ENCODE measurements at regions of chr11 and their contacts with region 1.

Region 1: DNA sequence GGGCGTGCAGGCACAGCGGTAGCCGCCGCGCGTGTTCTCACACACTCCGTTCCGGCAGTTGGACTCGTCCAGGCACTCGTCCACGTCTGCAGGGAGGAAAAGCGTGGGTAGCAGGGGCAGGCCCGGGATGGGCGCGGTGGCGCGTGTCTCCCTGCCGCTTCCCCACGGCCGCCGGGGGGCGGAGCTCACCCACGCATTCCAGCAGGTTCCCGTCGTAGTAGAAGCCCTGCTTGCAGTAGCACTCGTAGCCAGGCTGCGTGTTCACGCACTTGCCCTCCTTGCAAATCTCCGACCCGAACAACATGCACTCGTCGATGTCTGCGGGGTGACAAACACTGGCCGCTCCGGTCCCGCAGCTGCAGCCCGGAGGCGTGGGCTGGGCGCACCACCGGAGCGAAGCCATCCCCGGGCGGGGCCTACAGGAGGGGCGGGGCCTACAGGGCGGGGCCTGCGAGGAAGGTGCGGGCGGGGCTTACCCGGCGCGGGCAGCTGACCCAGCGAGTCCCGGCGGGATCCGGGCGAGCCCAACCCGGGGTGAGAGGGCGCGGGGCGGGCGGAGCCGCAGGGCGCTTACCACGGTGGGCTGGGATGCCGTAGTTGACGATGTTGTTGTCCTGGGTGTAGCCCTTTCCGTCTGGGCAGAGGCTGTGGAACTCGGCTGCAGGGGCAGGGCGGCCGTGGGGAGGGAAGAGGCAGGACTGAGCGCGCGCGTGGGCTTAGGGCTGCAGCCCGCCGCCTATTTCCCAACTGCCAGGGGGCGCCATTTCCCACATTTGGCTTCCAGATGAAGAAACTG is 15.6 kb downstream of the SCYL1 start:
- DNase-seq: no peak
- H3K4me3 ChIP-seq: peak overlapping the region; percentile 55
- CTCF ChIP-seq: peak; percentile 81

Region 2: DNA sequence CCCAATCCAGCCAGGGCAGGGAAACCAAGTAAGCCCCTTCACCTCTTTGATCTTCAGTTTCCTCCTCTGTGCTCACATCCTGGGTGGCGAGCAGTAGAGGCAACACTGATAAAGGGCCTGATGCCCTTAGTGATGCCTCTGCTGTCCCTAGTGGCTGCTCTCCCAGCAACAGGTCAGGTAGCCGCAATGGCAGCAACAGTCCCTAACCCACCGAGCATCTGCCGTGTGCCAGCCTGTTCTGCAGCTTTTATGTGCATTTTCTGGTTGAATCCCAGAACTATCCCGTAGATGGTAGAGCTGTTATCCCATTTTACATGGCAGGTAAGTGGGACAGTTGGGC is 10.4 kb before region 1 on chr11:
- CTCF ChIA-PET with region 1: interaction called, 65 read pairs
- POLR2A ChIA-PET with region 1: interaction called, 7 read pairs
- DNase-seq: no peak
- H3K4me3 ChIP-seq: no peak overlapping the region
- CTCF ChIP-seq: peak; percentile 29

Region 3: DNA sequence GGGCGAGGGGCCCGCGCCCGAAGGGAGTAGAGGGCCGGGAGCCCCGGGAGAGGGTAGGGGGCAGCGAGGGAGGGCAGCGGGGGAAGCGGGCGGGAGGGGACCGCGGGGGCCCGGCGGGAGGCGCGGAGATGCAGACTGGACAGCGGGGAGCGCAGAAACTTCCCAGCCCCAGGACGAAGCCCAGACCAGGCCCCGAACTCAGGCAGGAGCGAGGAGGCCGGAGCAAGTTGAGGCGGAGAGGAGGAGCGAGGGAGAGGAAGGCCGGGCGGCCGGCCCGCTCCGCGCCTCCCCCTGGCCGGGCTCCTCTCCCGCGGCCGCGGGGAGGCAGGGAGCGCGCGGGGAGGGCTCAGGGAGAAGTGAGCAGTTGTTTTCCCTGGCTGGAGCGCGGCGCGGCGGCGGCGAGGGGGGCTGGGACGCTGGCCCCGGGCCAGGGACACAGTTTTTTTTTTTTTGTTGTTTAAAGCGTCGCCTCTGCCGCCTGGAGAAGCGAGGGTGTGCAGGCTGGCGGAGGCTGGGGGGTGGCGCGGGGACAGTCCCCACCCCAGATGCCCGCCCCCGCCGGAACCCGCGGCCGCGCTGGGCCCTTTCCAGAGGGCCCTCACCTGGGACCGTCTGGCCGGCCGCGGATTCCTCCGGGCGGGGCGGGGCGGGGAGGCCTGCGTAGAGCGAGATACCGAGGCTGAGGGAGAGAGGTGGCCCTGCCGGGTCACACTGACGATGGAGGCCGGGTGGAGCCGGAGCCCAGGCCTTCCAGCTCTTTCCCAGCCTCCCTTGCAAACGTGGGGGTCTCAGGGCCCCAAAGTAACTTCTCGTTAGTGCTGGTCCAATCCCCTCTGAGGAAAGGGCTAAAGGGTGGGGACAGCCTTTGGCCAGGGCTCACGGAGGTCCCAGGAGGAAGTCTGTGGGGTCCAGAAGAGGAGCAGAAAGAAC is 17.8 kb after region 1 on chr11 and contains the start of gene LTBP3:
- CTCF ChIA-PET with region 1: interaction called, 207 read pairs
- POLR2A ChIA-PET with region 1: interaction called, 5 read pairs
- DNase-seq: no peak
- H3K4me3 ChIP-seq: peak within 1 kb of the TSS; percentile 69
- CTCF ChIP-seq: no peak

Region 4: GRCh38 chr11:65575568-65576231 is 35.2 kb after region 1 on chr11 and contains the start of gene EHBP1L1:
- CTCF ChIA-PET with region 1: interaction called, 207 read pairs
- POLR2A ChIA-PET with region 1: interaction called, 28 read pairs
- DNase-seq: no peak
- H3K4me3 ChIP-seq: peak within 1 kb of the TSS; percentile 68
- CTCF ChIP-seq: no peak

Region 5: GRCh38 chr11:65606876-65607613 is 66.5 kb after region 1 on chr11:
- CTCF ChIA-PET with region 1: interaction called, 18 read pairs
- POLR2A ChIA-PET with region 1: no interaction called
- DNase-seq: peak; percentile 59
- H3K4me3 ChIP-seq: peak overlapping the region; percentile 40
- CTCF ChIP-seq: no peak

Measured in AG04449 (cell line).